Heart left ventricle (tissue), 16 donors: ENCODE measurements at regions of chr9 and their contacts with region 1.

Region 1: GRCh38 chr9:87324613-87325194 is 173.0 kb upstream of the DAPK1 start:
- DNase-seq: no peak
- ATAC-seq: peak in 3 of 4 donors; percentile 70 to 85 (median 71)
- H3K4me3 ChIP-seq: no peak overlapping the region
- H3K27ac ChIP-seq: no peak overlapping the region
- H3K4me1 ChIP-seq: peaks cover 0 to 11% (median 0%) of the 10 kb centered on the region in 12 donors
- H3K27me3 ChIP-seq: peaks cover 0 to 3% (median 0%) of the 10 kb centered on the region in 9 donors
- CTCF ChIP-seq: peak; percentile 70 to 88 (median 82)
- POLR2A ChIP-seq: no peak

Region 2: GRCh38 chr9:86413966-86414880 is 910.5 kb before region 1 on chr9:
- intact Hi-C with region 1: loop called in 5 of 10 experiments (anchors 2 to 5 kb)
- DNase-seq: no peak
- ATAC-seq: peak in 1 of 4 donors; percentile 48
- H3K4me3 ChIP-seq: no peak overlapping the region
- H3K27ac ChIP-seq: no peak overlapping the region
- H3K4me1 ChIP-seq: peaks cover 0 to 7% (median 0%) of the 10 kb centered on the region in 12 donors
- H3K27me3 ChIP-seq: peaks cover 0 to under 1% (median 0%) of the 10 kb centered on the region in 9 donors
- CTCF ChIP-seq: peak; percentile 67 to 81 (median 75)
- POLR2A ChIP-seq: no peak

Region 3: GRCh38 chr9:86434039-86434726 is 890.5 kb before region 1 on chr9:
- intact Hi-C with region 1: loop called (anchors 1 to 5 kb)
- DNase-seq: peak in 3 of 5 donors; percentile 9 to 25 (median 25)
- ATAC-seq: peak; percentile 51 to 75 (median 58)
- H3K4me3 ChIP-seq: peak overlapping the region in 2 of 12 donors; percentile 14 to 26
- H3K27ac ChIP-seq: peak overlapping the region in 4 of 12 donors; percentile 13 to 37 (median 28)
- H3K4me1 ChIP-seq: no peaks in the 10 kb centered on the region
- H3K27me3 ChIP-seq: no peaks in the 10 kb centered on the region
- CTCF ChIP-seq: peak; percentile 48 to 80 (median 68)
- POLR2A ChIP-seq: no peak

Region 4: DNA sequence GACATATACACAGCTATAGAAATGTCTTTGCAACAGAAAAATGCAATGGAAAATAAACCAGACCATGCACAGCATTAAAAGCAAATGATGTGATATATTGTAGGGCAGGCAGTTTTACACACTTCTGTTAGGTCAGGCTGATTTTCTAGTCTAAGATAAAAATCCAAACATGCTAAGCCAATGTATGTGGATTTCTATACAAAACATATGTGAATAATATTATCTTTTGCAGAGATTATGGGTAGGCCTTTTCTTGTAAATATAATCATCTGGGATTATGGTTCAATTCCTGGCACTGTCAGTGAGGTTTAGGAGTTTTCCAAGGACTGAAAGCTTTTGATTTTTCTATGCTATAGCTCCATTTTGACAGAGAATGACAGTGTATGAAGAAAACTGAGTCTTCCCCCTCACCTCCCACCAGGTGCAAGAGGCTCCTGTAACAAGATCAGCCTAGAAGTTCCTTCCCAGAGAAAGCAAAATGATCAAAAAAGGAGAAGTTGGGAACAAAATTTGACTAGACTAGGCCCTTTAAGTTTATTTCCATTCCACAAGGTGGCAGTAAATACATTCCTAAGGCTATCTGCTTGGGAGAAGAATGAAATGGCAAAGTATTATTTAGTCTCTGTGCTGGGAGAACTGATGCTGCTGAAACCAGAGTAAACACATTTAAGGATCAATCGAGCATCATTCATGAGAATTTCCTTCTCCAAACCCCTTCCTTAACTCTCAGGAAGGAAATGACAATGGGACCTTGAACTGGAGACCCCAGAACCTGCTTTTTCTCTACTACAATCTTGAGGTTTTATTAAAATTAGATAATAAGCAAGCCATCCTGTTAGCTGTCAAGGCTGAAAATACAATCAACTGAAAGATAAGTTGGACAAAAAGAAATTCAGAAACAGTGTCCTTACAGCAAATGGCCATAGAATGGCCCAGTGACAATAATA is 837.5 kb before region 1 on chr9:
- intact Hi-C with region 1: loop called (anchors 1 to 2 kb)
- DNase-seq: no peak
- ATAC-seq: peak in 3 of 4 donors; percentile 67 to 75 (median 72)
- H3K4me3 ChIP-seq: no peak overlapping the region
- H3K27ac ChIP-seq: no peak overlapping the region
- H3K4me1 ChIP-seq: peaks cover 0 to 8% (median 0%) of the 10 kb centered on the region in 12 donors
- H3K27me3 ChIP-seq: no peaks in the 10 kb centered on the region
- CTCF ChIP-seq: peak; percentile 45 to 77 (median 67)
- POLR2A ChIP-seq: no peak

Region 5: GRCh38 chr9:86614871-86615849 is 709.5 kb before region 1 on chr9:
- intact Hi-C with region 1: loop called in 4 of 10 experiments (anchors 2 to 10 kb)
- DNase-seq: no peak
- ATAC-seq: no peak
- H3K4me3 ChIP-seq: no peak overlapping the region
- H3K27ac ChIP-seq: no peak overlapping the region
- H3K4me1 ChIP-seq: peaks cover 0 to 8% (median 0%) of the 10 kb centered on the region in 12 donors
- H3K27me3 ChIP-seq: no peaks in the 10 kb centered on the region
- CTCF ChIP-seq: peak; percentile 19 to 56 (median 41)
- POLR2A ChIP-seq: no peak

Region 6: GRCh38 chr9:86637515-86637914 is 687.2 kb before region 1 on chr9:
- intact Hi-C with region 1: loop called in 3 of 10 experiments (anchors 5 to 10 kb)
- DNase-seq: peak in 3 of 5 donors; percentile 22 to 40 (median 24)
- ATAC-seq: peak in 2 of 4 donors; percentile 43 to 57
- H3K4me3 ChIP-seq: no peak overlapping the region
- H3K27ac ChIP-seq: no peak overlapping the region
- H3K4me1 ChIP-seq: no peaks in the 10 kb centered on the region
- H3K27me3 ChIP-seq: peaks cover 0 to 12% (median 0%) of the 10 kb centered on the region in 9 donors
- CTCF ChIP-seq: peak; percentile 25 to 63 (median 38)
- POLR2A ChIP-seq: no peak

Region 7: GRCh38 chr9:86843206-86843605 is 481.5 kb before region 1 on chr9:
- intact Hi-C with region 1: loop called in 1 of 10 experiments (anchors 10 kb)
- DNase-seq: no peak
- ATAC-seq: no peak
- H3K4me3 ChIP-seq: no peak overlapping the region
- H3K27ac ChIP-seq: no peak overlapping the region
- H3K4me1 ChIP-seq: peaks cover 0 to 11% (median 0%) of the 10 kb centered on the region in 12 donors
- H3K27me3 ChIP-seq: no peaks in the 10 kb centered on the region
- CTCF ChIP-seq: no peak
- POLR2A ChIP-seq: no peak

Region 8: GRCh38 chr9:87342743-87343142 is 18.0 kb after region 1 on chr9:
- intact Hi-C with region 1: no loop called
- DNase-seq: peak; percentile 28 to 64 (median 44)
- ATAC-seq: peak in 3 of 4 donors; percentile 47 to 69 (median 65)
- H3K4me3 ChIP-seq: no peak overlapping the region
- H3K27ac ChIP-seq: no peak overlapping the region
- H3K4me1 ChIP-seq: peaks cover 0 to 6% (median 0%) of the 10 kb centered on the region in 12 donors
- H3K27me3 ChIP-seq: peaks cover 0 to 24% (median 3%) of the 10 kb centered on the region in 9 donors
- CTCF ChIP-seq: no peak
- POLR2A ChIP-seq: no peak

Region 9: DNA sequence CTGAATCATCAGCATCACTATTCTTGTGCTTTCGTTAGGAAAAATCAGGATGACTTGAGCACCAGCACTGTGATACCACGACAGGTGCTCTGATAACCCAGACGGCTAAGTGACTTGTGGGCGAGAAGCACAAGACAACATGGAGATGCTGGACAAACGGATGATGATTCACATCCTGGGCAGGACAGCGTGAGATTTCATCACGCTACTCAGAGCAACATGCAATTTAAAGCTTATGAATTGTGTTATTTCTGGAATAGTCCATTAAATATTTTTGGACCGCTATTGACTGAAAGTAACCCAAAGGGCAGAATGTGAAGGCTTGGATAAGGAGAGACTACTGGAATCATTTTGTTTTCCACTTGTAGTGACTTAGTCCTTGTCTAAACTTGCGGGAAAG is 58.2 kb after region 1 on chr9:
- intact Hi-C with region 1: no loop called
- DNase-seq: no peak
- ATAC-seq: peak in 2 of 4 donors; percentile 65
- H3K4me3 ChIP-seq: no peak overlapping the region
- H3K27ac ChIP-seq: peak overlapping the region in 1 of 12 donors; percentile 10
- H3K4me1 ChIP-seq: peaks cover 0 to 9% (median 0%) of the 10 kb centered on the region in 12 donors
- H3K27me3 ChIP-seq: peaks cover 0 to 4% (median 0%) of the 10 kb centered on the region in 9 donors
- CTCF ChIP-seq: no peak
- POLR2A ChIP-seq: no peak

Region 10: GRCh38 chr9:87395804-87396479 is 71.2 kb after region 1 on chr9:
- intact Hi-C with region 1: no loop called
- DNase-seq: no peak
- ATAC-seq: no peak
- H3K4me3 ChIP-seq: no peak overlapping the region
- H3K27ac ChIP-seq: no peak overlapping the region
- H3K4me1 ChIP-seq: no peaks in the 10 kb centered on the region
- H3K27me3 ChIP-seq: no peaks in the 10 kb centered on the region
- CTCF ChIP-seq: no peak
- POLR2A ChIP-seq: no peak